GM23248 (cell line): ENCODE measurements at regions of chr13 and their contacts with region 1.

Region 1: DNA sequence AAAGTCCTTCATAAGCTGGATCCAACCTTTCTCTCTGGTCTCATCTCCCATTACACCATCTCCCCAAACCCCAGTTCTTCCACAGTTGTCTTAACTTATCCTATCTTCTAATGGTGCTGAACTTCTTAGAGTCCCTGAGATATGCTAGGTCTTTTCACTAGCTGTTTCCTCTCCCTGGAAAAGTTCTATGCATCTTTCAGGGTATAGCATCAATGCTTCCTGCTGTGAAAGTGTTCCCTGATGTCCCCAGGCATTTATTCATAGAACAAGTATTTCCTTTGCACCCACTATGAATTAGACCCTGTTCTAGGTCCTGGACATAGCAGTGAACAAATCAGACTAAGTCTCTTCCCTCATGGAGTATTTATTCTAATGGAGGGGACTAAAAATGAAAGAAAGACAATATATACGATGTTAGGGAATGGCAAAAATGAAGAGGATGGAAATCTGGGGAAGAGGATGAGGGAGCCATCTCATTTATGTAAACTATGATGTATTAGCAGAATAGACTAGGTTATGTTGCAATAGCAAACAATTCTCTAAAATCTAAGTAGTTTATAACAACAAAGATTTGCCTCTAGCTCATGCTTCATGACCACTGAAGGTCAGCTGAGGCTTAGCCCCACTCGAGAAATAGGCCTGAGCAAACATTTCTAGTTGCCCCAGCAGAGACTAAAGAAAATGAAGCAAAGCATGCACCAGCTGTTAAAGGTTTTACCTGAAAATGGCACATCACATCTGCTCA is 120.0 kb downstream of the CYSLTR2 start:
- DNase-seq: no peak
- H3K4me3 ChIP-seq: no peak overlapping the region
- H3K27ac ChIP-seq: no peak overlapping the region
- H3K4me1 ChIP-seq: peaks cover 29% of the 10 kb centered on the region
- H3K27me3 ChIP-seq: 0 out of 2 replicates have a peak, but pooled peaks cover 3% of the 10 kb centered on the region

Region 2: GRCh38 chr13:47650209-47650608 is 1123.5 kb before region 1 on chr13:
- in situ Hi-C with region 1: no loop called
- DNase-seq: no peak
- H3K4me3 ChIP-seq: no peak overlapping the region
- H3K27ac ChIP-seq: no peak overlapping the region
- H3K4me1 ChIP-seq: no peaks in the 10 kb centered on the region
- H3K27me3 ChIP-seq: no peaks in the 10 kb centered on the region

Region 3: GRCh38 chr13:48318821-48319511 is 454.7 kb before region 1 on chr13:
- in situ Hi-C with region 1: no loop called
- DNase-seq: peak; percentile 27
- H3K4me3 ChIP-seq: no peak overlapping the region
- H3K27ac ChIP-seq: no peak overlapping the region
- H3K4me1 ChIP-seq: no peaks in the 10 kb centered on the region
- H3K27me3 ChIP-seq: no peaks in the 10 kb centered on the region

Region 4: GRCh38 chr13:48595431-48596429 is 178.0 kb before region 1 on chr13:
- in situ Hi-C with region 1: loop called (anchors 5 kb)
- DNase-seq: peak; percentile 77
- H3K4me3 ChIP-seq: no peak overlapping the region
- H3K27ac ChIP-seq: no peak overlapping the region
- H3K4me1 ChIP-seq: peaks cover 4% of the 10 kb centered on the region; the same call in 1 of the 2 replicates
- H3K27me3 ChIP-seq: no peaks in the 10 kb centered on the region; the same call in none of the 2 replicates

Region 5: DNA sequence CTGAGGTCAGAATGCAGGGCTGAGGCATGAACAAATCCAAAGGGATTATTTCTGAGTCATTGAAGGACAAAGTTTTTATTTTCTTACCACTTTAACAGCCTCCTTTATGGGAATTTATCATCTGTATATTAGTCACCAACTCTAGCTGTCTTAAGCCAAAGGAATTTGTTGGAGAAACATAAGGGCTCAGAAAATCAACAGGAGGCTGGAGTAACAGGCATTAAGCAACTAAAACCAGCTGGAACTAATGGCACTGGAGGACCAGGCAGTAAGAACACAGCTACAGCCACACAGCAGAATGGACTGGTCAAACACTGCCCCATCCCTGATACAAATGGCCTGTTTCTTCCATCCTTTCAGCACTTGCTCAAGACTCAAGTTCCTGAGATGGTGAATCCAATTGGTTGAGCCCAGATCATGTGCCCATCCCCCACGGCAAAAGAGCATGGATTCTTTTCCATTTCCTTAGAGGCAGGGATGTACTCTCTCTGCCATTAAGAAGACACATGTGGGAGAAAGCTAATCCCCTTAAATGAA is 44.9 kb after region 1 on chr13:
- in situ Hi-C with region 1: no loop called
- DNase-seq: peak; percentile 92
- H3K4me3 ChIP-seq: no peak overlapping the region
- H3K27ac ChIP-seq: peak overlapping the region; percentile 17; the same call in 1 of the 2 replicates
- H3K4me1 ChIP-seq: peaks cover 17% of the 10 kb centered on the region
- H3K27me3 ChIP-seq: no peaks in the 10 kb centered on the region

Region 6: DNA sequence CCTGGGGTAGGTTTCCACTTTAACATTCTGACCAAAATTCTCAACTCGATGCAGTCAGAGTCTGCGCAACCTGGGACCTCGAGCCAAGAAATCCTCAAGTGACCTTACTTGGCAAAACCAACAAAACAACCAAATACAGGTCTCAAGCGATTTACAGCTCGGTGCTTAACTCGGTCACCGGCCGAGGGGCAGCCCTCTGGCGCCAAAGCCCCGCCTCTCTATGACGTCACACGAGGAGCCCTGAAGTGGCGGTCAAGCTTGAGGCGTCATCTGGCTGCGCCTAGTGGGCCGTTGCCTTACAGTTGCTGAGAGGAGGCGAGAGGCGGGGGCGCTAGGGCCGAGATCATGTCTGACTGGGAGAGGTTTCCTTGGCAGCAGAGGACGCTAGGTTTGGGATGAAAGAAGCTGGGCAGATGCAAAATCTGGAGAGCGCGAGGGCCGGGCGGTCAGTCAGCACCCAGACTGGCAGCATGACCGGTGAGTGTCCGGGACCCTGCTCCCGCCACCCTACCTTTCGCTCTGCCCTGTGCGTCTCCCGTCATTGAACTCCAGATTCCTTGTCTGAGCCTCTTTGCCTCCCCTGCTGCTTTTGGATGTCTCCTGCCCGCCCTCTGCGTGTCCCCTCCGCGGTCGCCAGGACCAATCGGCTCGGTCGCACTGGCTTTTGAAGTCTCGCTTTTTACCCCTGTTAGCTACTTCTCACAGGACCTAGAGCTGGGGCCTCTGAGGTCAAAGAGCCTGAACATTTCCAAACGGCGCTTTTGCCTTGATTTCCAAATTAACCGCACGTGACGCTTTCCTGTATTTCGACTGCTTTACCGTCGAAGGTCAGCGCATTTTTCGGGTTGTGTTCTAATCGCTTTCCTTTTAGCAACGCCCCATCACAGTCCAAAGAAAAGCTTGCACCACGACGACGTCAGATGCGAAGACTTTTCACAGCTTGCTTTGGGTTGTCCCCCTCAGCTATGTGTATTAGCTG is 474.2 kb after region 1 on chr13 and contains the start of gene CDADC1:
- in situ Hi-C with region 1: no loop called
- DNase-seq: peak; percentile 99
- H3K4me3 ChIP-seq: peak within 1 kb of the TSS; percentile 93
- H3K27ac ChIP-seq: peak within 1 kb of the TSS; percentile 86
- H3K4me1 ChIP-seq: peaks cover 14% of the 10 kb centered on the region; the same call in 1 of the 2 replicates
- H3K27me3 ChIP-seq: no peaks in the 10 kb centered on the region
- total RNA-seq, gene CDADC1: 1.8 and 8.7 TPM in 2 replicates